AG04449 (cell line): ENCODE measurements at regions of chr2 and their contacts with region 1.

Region 1: DNA sequence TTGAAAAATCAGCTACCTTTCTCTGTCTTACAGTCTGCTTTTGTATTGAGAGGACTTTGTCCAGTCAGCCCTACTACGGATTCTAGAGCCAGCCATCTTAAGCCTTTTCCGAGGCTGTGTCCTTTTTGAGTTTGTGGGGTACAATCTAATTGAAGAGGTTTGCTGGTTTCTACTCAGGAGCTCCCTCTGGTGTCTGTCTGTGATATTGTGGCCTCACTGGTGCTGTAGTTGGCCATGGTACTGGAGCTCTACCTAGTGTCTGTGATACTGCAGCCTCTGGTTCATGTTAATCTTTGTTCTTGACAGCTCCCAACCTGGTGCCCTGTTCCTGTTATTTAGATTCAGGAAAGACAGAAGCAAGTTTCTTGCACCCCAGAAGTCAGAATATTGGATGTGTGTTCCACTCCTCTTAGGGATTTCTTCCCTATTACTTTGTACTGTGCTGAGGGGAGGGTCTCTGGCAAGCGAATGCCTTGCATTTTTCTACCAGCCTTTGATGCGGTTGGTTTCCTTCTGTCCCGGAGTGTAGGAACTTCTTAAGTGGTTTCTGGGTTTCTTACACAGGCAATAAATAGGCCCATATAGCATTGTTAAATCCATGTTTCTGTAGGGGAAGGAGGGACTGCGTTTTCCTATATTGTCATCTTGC is 78.5 kb downstream of the ACSL3 start:
- DNase-seq: no peak
- H3K4me3 ChIP-seq: no peak overlapping the region
- CTCF ChIP-seq: peak; percentile 72

Region 2: GRCh38 chr2:222582928-222583327 is 356.4 kb before region 1 on chr2:
- CTCF ChIA-PET with region 1: no interaction called
- POLR2A ChIA-PET with region 1: no interaction called
- DNase-seq: no peak
- H3K4me3 ChIP-seq: no peak overlapping the region
- CTCF ChIP-seq: peak; percentile 1

Region 3: DNA sequence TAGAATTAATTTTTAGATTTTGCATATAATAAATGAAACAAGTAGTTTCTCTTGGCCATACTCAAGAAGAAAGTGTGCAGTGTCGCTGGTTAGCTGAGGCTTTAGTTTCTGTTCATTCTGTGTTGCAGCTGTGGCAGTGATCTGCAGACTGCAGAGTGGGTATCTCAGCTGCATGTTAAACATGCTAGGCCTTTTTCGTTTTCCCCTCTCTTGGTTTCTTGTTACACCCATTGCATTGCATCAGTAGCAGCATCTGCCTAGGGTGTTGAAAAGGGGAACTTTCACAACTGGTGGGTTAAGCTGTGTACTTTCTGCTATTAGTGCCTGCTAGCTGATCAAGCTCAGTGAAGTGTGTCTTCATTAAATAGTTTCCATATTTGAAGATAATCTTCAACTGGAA is 27.2 kb before region 1 on chr2:
- CTCF ChIA-PET with region 1: interaction called, 54 read pairs
- POLR2A ChIA-PET with region 1: no interaction called
- DNase-seq: no peak
- H3K4me3 ChIP-seq: no peak overlapping the region
- CTCF ChIP-seq: no peak

Region 4: GRCh38 chr2:222919841-222920526 is 19.3 kb before region 1 on chr2:
- CTCF ChIA-PET with region 1: interaction called, 54 read pairs
- POLR2A ChIA-PET with region 1: no interaction called
- DNase-seq: peak; percentile 78
- H3K4me3 ChIP-seq: no peak overlapping the region
- CTCF ChIP-seq: no peak

Region 5: GRCh38 chr2:222950638-222951285 is 11.4 kb after region 1 on chr2:
- CTCF ChIA-PET with region 1: interaction called, 30 read pairs
- POLR2A ChIA-PET with region 1: no interaction called
- DNase-seq: peak; percentile 65
- H3K4me3 ChIP-seq: no peak overlapping the region
- CTCF ChIP-seq: no peak

Region 6: GRCh38 chr2:222959336-222959735 is 20.0 kb after region 1 on chr2:
- CTCF ChIA-PET with region 1: interaction called, 16 read pairs
- POLR2A ChIA-PET with region 1: no interaction called
- DNase-seq: peak; percentile 66
- H3K4me3 ChIP-seq: no peak overlapping the region
- CTCF ChIP-seq: peak; percentile 75

Region 7: GRCh38 chr2:222993920-222994650 is 54.8 kb after region 1 on chr2:
- CTCF ChIA-PET with region 1: no interaction called
- POLR2A ChIA-PET with region 1: no interaction called
- DNase-seq: peak; percentile 94
- H3K4me3 ChIP-seq: no peak overlapping the region
- CTCF ChIP-seq: no peak

Region 8: GRCh38 chr2:223222403-223222802 is 283.1 kb after region 1 on chr2:
- CTCF ChIA-PET with region 1: no interaction called
- POLR2A ChIA-PET with region 1: no interaction called
- DNase-seq: no peak
- H3K4me3 ChIP-seq: no peak overlapping the region
- CTCF ChIP-seq: no peak